ENCODE measurements at regions of chr19 and their contacts with region 1.

Region 1: DNA sequence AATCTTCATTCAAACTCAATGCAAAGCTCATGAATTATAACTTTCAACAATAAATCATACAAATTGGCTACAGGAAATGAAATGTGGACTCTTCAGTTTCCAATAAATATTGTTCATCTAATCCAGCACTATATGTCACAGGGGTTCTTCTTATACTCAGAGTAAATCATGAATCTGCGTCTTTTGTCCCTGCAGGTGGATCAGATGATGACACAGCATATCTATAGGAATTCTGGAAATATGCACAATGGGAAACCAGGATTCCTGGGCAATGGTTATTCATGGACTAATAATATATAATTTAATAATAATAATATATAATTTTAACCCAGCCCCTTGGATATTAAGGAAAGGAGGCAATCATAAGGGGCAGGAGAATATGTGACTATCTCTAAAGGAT is 8.4 kb downstream of the ZNF573 start:
- DNase-seq: no peak
- ATAC-seq: no peak
- H3K4me3 Mint-ChIP-seq: no peak overlapping the region
- H3K27ac Mint-ChIP-seq: no peak overlapping the region
- H3K4me1 Mint-ChIP-seq: peaks cover 6% of the 10 kb centered on the region
- H3K27me3 Mint-ChIP-seq: no peaks in the 10 kb centered on the region
- CTCF ChIP-seq: no peak

Region 2: GRCh38 chr19:36973021-36973843 is 797.8 kb before region 1 on chr19:
- CTCF ChIA-PET with region 1: no interaction called
- POLR2A ChIA-PET with region 1: no interaction called
- intact Hi-C with region 1: loop called (anchors 5 kb)
- DNase-seq: peak; percentile 75
- ATAC-seq: peak; percentile 97
- H3K4me3 Mint-ChIP-seq: peak overlapping the region; percentile 98
- H3K27ac Mint-ChIP-seq: peak overlapping the region; percentile 94
- H3K4me1 Mint-ChIP-seq: peaks cover 10% of the 10 kb centered on the region
- H3K27me3 Mint-ChIP-seq: no peaks in the 10 kb centered on the region
- CTCF ChIP-seq: peak; percentile 38